Astrocyte of the cerebellum (primary cell): ENCODE measurements at regions of chr12 and their contacts with region 1.

Region 1: GRCh38 chr12:40511341-40511740 is 180.9 kb upstream of the CNTN1 start:
- DNase-seq: no peak
- H3K4me3 ChIP-seq: no peak overlapping the region
- CTCF ChIP-seq: no peak

Region 2: GRCh38 chr12:40464121-40464520 is 47.2 kb before region 1 on chr12:
- in situ Hi-C with region 1: no loop called
- DNase-seq: no peak
- H3K4me3 ChIP-seq: no peak overlapping the region
- CTCF ChIP-seq: no peak

Region 3: DNA sequence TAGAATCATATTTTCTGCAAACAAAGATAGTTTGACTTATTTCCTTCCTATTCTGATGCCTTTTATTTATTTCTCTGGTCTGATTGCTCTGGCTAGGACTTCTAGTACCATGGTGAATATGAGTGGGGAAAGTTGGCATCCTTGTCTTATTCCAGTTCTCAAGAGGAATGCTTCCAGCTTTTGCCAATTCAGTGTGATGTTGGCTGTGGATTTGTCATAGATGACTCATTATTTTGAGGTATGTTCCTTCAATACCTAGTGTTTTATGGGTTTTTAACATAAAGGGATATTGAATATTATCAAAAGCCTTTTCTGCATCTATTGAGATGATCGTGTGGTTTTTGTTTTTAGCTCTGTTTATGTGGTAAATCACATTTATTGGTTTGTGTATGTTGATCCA is 41.5 kb after region 1 on chr12:
- in situ Hi-C with region 1: loop called (anchors 5 kb)
- DNase-seq: no peak
- H3K4me3 ChIP-seq: no peak overlapping the region
- CTCF ChIP-seq: no peak